Naive thymus-derived CD4-positive, alpha-beta T cell (primary cell): ENCODE measurements at regions of chr12 and their contacts with region 1.

Region 1: DNA sequence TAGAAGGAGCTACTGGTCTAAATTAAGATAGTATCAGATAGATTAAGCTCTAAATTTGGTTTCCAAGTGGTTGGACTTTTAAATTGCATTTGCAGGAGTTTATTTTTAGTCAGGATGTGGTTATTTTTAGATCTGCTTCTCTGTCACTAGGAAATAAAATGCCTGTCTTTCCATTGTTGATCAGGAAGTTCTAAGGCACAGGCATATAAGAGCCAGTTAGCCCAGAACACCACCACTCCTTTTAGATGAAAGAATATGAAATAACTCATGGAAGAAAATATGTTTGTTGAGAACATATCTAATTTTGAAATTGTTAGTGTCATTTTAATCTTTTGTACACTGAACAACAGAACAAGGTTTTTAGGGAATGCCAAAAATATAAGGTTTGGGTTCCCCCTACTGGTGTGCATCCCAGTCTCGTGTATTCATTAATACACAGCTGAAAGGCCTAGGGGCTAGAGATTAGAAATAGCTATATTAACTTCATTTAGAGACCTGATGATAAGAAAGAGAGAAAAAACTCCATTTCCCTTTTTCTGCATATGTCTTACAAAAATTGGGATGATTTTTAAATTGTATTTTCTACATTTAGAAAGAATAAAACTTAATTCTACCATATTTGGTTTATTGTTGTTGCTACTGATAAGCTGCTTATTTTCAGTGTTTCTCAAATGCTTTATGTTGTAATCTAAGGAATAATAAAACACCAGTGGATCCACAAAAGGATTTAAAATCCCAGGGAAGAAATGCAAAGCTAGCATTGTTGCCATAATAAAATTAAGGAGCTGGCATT is 67.2 kb downstream of the RIC8B start:
- DNase-seq: peak in 6 of 9 donors; percentile 24 to 49 (median 44)
- ATAC-seq: peak; percentile 45
- H3K4me3 ChIP-seq: no peak overlapping the region
- H3K4me3 Mint-ChIP-seq: no peak overlapping the region
- H3K27ac ChIP-seq: no peak overlapping the region
- H3K27ac Mint-ChIP-seq: peak overlapping the region in 2 of 9 donors; percentile 20 to 26
- H3K4me1 ChIP-seq: no peaks in the 10 kb centered on the region
- H3K4me1 Mint-ChIP-seq: peaks cover 14 to 32% (median 20%) of the 10 kb centered on the region in 7 donors
- H3K27me3 ChIP-seq: no peaks in the 10 kb centered on the region
- H3K27me3 Mint-ChIP-seq: no peaks in the 10 kb centered on the region

Region 2: DNA sequence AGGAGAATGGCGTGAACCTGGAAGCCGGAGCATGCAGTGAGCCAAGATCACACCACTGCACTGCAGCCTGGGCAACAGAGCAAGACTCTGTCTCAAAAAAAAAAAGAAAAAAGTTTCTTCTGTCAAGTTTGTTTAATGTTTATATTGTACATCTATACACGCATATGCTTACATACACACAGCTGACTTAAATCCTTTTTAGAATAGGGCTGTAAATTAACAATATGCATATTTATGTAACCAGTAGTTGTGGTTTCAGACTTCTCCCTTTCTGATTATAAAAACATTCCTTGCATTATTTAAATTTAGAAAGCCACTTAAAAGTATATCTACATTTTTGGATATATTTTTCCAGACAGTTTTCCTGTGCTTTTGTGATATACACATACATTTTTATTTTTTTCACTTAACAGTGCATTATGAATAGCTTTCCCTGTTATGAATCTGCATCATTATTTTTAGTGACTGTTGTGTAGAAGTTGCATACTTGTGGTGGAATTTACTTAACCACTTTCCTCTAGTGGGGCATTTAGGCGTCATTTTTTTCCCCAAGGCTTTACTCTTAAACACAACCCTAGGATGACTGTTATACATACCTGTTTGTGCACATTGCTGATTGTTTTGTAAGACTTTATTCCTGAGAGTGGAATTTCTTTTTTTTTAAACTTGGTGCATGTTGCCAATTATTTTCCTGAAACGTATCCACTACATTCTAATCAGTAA is 454.7 kb before region 1 on chr12:
- CTCF ChIA-PET with region 1: interaction called, 7 read pairs
- POLR2A ChIA-PET with region 1: no interaction called
- intact Hi-C with region 1: loop called (anchors 1 kb)
- DNase-seq: no peak
- ATAC-seq: no peak
- H3K4me3 ChIP-seq: no peak overlapping the region
- H3K4me3 Mint-ChIP-seq: no peak overlapping the region
- H3K27ac ChIP-seq: no peak overlapping the region
- H3K27ac Mint-ChIP-seq: no peak overlapping the region
- H3K4me1 ChIP-seq: no peaks in the 10 kb centered on the region
- H3K4me1 Mint-ChIP-seq: peaks cover 0 to 4% (median 0%) of the 10 kb centered on the region in 7 donors
- H3K27me3 ChIP-seq: no peaks in the 10 kb centered on the region
- H3K27me3 Mint-ChIP-seq: no peaks in the 10 kb centered on the region

Region 3: GRCh38 chr12:106506691-106507090 is 335.0 kb before region 1 on chr12:
- CTCF ChIA-PET with region 1: no interaction called
- POLR2A ChIA-PET with region 1: no interaction called
- intact Hi-C with region 1: loop called in 1 of 2 experiments (anchors 10 kb)
- DNase-seq: no peak
- ATAC-seq: no peak
- H3K4me3 ChIP-seq: no peak overlapping the region
- H3K4me3 Mint-ChIP-seq: no peak overlapping the region
- H3K27ac ChIP-seq: no peak overlapping the region
- H3K27ac Mint-ChIP-seq: peak overlapping the region in 1 of 9 donors; percentile 34
- H3K4me1 ChIP-seq: no peaks in the 10 kb centered on the region
- H3K4me1 Mint-ChIP-seq: no peaks in the 10 kb centered on the region
- H3K27me3 ChIP-seq: no peaks in the 10 kb centered on the region
- H3K27me3 Mint-ChIP-seq: no peaks in the 10 kb centered on the region

Region 4: GRCh38 chr12:106645074-106645421 is 196.7 kb before region 1 on chr12:
- CTCF ChIA-PET with region 1: no interaction called
- POLR2A ChIA-PET with region 1: no interaction called
- intact Hi-C with region 1: no loop called
- DNase-seq: no peak
- ATAC-seq: no peak
- H3K4me3 ChIP-seq: no peak overlapping the region
- H3K4me3 Mint-ChIP-seq: no peak overlapping the region
- H3K27ac ChIP-seq: no peak overlapping the region
- H3K27ac Mint-ChIP-seq: no peak overlapping the region
- H3K4me1 ChIP-seq: no peaks in the 10 kb centered on the region
- H3K4me1 Mint-ChIP-seq: peaks cover 0 to 2% (median 0%) of the 10 kb centered on the region in 7 donors
- H3K27me3 ChIP-seq: no peaks in the 10 kb centered on the region
- H3K27me3 Mint-ChIP-seq: peaks cover 4 to 15% (median 13%) of the 10 kb centered on the region in 5 donors

Region 5: DNA sequence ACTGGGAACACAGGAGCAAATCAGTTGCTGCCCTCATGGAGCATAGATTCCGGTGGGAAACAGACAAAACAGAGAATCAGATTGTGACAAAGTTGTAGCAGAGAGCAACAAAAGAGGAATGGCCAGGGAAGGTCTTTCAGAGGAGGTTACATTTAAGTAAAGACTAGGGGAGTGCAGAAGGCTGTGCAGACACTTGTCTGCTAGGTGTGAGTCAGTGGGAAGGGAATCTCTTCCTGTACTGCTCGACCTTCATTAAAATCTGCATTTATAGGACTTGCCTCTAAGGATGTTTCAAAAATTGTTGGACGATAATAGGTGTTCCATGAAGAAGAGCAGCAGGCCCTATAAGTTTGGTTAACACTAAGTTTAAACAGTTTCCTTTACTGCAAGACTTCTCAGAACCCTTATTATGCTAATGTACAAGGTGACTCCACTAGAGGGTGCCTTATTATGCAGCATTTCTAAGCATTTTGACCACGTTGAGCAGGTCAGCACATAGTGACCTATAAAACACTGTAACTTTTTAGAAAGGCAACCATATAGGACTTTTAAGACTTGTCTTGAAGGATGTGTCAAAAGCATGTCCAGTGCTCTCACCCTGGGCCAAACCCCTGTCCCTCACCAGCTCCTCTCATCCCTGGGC is 159.0 kb before region 1 on chr12:
- CTCF ChIA-PET with region 1: no interaction called
- POLR2A ChIA-PET with region 1: no interaction called
- intact Hi-C with region 1: loop called in 1 of 2 experiments (anchors 2 kb)
- DNase-seq: no peak
- ATAC-seq: no peak
- H3K4me3 ChIP-seq: no peak overlapping the region
- H3K4me3 Mint-ChIP-seq: no peak overlapping the region
- H3K27ac ChIP-seq: no peak overlapping the region
- H3K27ac Mint-ChIP-seq: no peak overlapping the region
- H3K4me1 ChIP-seq: no peaks in the 10 kb centered on the region
- H3K4me1 Mint-ChIP-seq: no peaks in the 10 kb centered on the region
- H3K27me3 ChIP-seq: no peaks in the 10 kb centered on the region
- H3K27me3 Mint-ChIP-seq: peaks cover 0 to 4% (median 0%) of the 10 kb centered on the region in 5 donors

Region 6: DNA sequence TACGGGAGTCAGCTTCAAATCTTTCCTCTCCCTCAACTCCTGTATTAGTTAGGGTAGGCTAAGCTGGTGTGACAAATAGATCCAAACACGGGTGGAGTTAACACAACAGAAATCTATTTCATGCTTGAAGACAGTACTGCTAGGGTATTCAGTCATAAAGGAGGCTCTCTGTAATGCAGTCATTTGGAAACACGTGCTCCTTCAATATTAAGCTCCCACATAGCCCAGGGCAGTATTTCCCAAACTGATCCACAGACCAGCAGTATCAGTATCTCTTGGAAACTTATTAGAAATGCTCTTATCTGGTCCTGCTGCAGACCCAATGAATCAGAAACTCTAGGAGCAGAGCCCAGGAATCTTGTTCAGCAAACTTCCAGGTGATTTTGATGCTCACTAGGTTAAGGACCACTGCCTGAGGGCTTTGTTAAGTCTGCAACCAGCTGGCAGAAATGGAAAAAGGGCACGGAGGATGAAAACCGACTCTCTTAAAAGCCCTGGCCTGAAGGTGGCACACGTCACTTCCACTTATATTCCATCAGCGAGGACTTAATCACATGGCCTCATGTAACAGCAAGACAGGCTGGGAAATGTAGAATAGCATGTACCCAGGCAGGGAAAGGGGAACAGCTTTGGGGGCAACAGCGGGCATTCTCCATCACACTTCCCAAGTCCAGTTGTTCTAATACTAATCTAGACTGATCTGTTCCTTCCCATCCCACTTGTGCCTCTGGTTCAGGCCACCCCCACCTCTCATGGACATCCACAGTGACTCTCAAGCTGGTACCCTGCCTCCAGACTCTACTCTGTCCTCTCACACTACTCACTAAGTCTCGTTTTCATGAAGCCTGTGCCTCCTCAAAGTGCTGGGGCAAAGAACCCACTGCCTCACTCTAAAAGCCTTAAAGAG is 105.4 kb before region 1 on chr12:
- CTCF ChIA-PET with region 1: interaction called, 11 read pairs
- POLR2A ChIA-PET with region 1: no interaction called
- intact Hi-C with region 1: loop called in 1 of 2 experiments (anchors 1 kb)
- DNase-seq: peak in 7 of 9 donors; percentile 18 to 41 (median 32)
- ATAC-seq: peak; percentile 67
- H3K4me3 ChIP-seq: no peak overlapping the region
- H3K4me3 Mint-ChIP-seq: no peak overlapping the region
- H3K27ac ChIP-seq: no peak overlapping the region
- H3K27ac Mint-ChIP-seq: peak overlapping the region in 1 of 9 donors; percentile 4
- H3K4me1 ChIP-seq: no peaks in the 10 kb centered on the region
- H3K4me1 Mint-ChIP-seq: peaks cover 0 to 8% (median 5%) of the 10 kb centered on the region in 7 donors
- H3K27me3 ChIP-seq: no peaks in the 10 kb centered on the region
- H3K27me3 Mint-ChIP-seq: peaks cover 0 to 18% (median 0%) of the 10 kb centered on the region in 5 donors

Region 7: DNA sequence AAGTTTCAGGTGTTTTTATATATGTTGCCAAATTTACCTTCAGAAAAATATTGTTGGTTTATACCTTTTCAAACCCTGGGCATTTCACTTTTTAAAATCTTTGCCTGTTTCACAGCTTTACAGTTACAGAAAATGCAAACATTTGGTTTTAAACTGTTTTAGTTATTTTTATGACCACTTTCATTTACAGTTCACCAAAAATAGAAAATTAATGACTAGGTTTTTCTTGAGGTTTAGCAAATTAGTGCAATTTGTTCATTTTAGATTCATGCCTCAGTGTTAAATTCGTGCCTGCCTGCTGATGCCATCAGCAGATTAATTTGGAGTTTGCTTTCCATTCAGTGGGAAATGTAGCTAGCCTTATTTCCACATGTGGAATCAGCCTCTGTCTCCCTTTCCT is 21.7 kb before region 1 on chr12:
- CTCF ChIA-PET with region 1: no interaction called
- POLR2A ChIA-PET with region 1: no interaction called
- intact Hi-C with region 1: no loop called
- DNase-seq: no peak
- ATAC-seq: no peak
- H3K4me3 ChIP-seq: no peak overlapping the region
- H3K4me3 Mint-ChIP-seq: no peak overlapping the region
- H3K27ac ChIP-seq: no peak overlapping the region
- H3K27ac Mint-ChIP-seq: peak overlapping the region in 1 of 9 donors; percentile 10
- H3K4me1 ChIP-seq: no peaks in the 10 kb centered on the region
- H3K4me1 Mint-ChIP-seq: peaks cover 0 to 9% (median 4%) of the 10 kb centered on the region in 7 donors
- H3K27me3 ChIP-seq: no peaks in the 10 kb centered on the region
- H3K27me3 Mint-ChIP-seq: no peaks in the 10 kb centered on the region

Region 8: GRCh38 chr12:106903241-106903945 is 61.7 kb after region 1 on chr12:
- CTCF ChIA-PET with region 1: no interaction called
- POLR2A ChIA-PET with region 1: no interaction called
- intact Hi-C with region 1: no loop called
- DNase-seq: peak; percentile 33 to 81 (median 64)
- ATAC-seq: peak; percentile 95
- H3K4me3 ChIP-seq: peak overlapping the region; percentile 55
- H3K4me3 Mint-ChIP-seq: peak overlapping the region; percentile 32 to 82 (median 68)
- H3K27ac ChIP-seq: no peak overlapping the region
- H3K27ac Mint-ChIP-seq: peak overlapping the region in 1 of 9 donors; percentile 60
- H3K4me1 ChIP-seq: peaks cover 0 to 4% of the 10 kb centered on the region in 2 donors
- H3K4me1 Mint-ChIP-seq: peaks cover 7 to 14% (median 11%) of the 10 kb centered on the region in 7 donors
- H3K27me3 ChIP-seq: peaks cover 0 to 5% of the 10 kb centered on the region in 2 donors
- H3K27me3 Mint-ChIP-seq: peaks cover 36 to 65% (median 46%) of the 10 kb centered on the region in 5 donors

Region 9: DNA sequence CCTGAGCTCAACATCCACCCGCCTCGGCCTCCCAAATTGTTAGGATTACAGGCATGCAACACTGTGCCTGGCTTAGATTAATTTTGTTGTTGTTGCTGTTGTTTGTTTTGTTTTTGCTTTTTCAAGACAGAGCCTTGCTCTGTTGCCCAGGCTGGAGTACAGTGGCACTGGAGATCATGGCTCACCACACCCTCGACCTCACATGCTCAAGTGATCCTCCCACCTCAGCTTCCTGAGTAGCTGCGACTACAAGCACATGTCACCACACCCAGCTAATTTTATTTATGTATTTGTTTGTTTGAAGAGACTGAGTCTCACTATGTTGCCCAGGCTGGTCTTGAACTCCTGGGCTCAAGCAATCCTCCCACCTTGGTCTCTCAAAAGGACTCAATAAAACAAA is 225.0 kb after region 1 on chr12:
- CTCF ChIA-PET with region 1: no interaction called
- POLR2A ChIA-PET with region 1: no interaction called
- intact Hi-C with region 1: no loop called
- DNase-seq: no peak
- ATAC-seq: no peak
- H3K4me3 ChIP-seq: no peak overlapping the region
- H3K4me3 Mint-ChIP-seq: peak overlapping the region in 1 of 10 donors; percentile 39
- H3K27ac ChIP-seq: no peak overlapping the region
- H3K27ac Mint-ChIP-seq: no peak overlapping the region
- H3K4me1 ChIP-seq: no peaks in the 10 kb centered on the region
- H3K4me1 Mint-ChIP-seq: peaks cover 0 to 19% (median 6%) of the 10 kb centered on the region in 7 donors
- H3K27me3 ChIP-seq: no peaks in the 10 kb centered on the region
- H3K27me3 Mint-ChIP-seq: peaks cover 0 to 6% (median 0%) of the 10 kb centered on the region in 5 donors